Mammary epithelial cell (primary cell): ENCODE measurements at regions of chr2 and their contacts with region 1.

Region 1: DNA sequence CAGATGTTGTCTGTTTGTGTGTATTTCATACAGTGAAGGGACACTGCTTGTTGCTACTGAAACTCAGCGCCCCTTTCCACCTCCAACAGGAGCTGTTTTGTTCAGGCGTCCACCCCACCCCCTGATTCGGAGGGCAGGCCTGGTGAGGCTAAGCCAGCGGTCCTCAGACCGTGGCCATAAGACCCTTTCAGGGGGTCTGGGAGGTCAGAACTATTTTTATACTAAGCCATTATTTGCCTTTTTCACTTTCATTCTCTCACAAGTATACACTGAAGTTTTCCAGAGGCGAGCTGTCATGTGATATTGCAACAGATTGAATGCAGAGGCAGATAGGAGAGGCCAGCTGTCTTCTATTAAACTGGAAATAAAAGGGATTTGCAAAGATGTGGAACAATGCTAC is 39.7 kb upstream of the IGFBP5 start:
- DNase-seq: no peak
- H3K4me3 ChIP-seq: no peak overlapping the region
- H3K27ac ChIP-seq: no peak overlapping the region
- H3K4me1 ChIP-seq: no peaks in the 10 kb centered on the region
- H3K27me3 ChIP-seq: no peaks in the 10 kb centered on the region
- CTCF ChIP-seq: no peak

Region 2: GRCh38 chr2:216572582-216573578 is 162.2 kb before region 1 on chr2:
- CTCF ChIA-PET with region 1: no interaction called
- dilution Hi-C with region 1: no loop called
- in situ Hi-C with region 1: no loop called
- intact Hi-C with region 1: no loop called
- DNase-seq: no peak
- H3K4me3 ChIP-seq: no peak overlapping the region
- H3K27ac ChIP-seq: no peak overlapping the region
- H3K4me1 ChIP-seq: no peaks in the 10 kb centered on the region
- H3K27me3 ChIP-seq: no peaks in the 10 kb centered on the region
- CTCF ChIP-seq: no peak

Region 3: DNA sequence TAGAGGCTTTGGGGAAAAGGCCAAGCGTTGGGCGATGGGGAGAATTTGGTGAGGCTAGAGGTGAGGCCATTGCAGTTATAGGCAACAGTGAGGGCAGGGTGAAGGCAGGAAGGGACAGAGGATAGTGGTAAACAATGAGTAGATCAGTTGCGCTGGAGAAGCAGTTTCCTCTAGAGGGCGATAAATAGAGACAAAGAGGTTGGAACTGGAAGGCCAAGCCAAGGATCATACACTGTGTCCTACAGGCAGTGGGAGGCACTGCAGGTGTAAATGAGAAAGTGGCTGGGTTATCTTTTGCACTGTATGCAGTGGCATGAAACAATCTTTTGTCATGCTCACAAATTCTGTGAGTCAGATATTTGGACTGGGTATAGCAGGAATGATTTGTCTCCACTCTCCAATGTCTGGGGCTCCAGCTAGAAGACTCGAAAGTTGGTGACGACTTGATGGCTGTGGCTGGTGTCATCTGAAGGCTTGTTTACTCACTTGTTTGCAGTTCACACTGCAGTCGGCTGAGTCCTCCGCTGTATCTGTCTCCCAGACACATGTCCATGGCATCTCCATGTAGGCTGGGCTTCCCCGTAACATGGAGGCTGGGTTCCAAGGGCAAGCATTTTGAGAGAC is 42.7 kb after region 1 on chr2:
- CTCF ChIA-PET with region 1: no interaction called
- dilution Hi-C with region 1: loop called (anchors 5 kb)
- in situ Hi-C with region 1: no loop called
- intact Hi-C with region 1: no loop called
- DNase-seq: peak; percentile 76
- H3K4me3 ChIP-seq: no peak overlapping the region
- H3K27ac ChIP-seq: no peak overlapping the region
- H3K4me1 ChIP-seq: peaks cover 13% of the 10 kb centered on the region
- H3K27me3 ChIP-seq: no peaks in the 10 kb centered on the region
- CTCF ChIP-seq: peak; percentile 96 to 97